Heart left ventricle (tissue), 16 donors: ENCODE measurements at regions of chr7 and their contacts with region 1.

Region 1: GRCh38 chr7:5243261-5243660 is 39.5 kb upstream of the SLC29A4 start:
- DNase-seq: no peak
- ATAC-seq: no peak
- H3K4me3 ChIP-seq: no peak overlapping the region
- H3K27ac ChIP-seq: no peak overlapping the region
- H3K4me1 ChIP-seq: peaks cover 0 to 17% (median 5%) of the 10 kb centered on the region in 12 donors
- H3K27me3 ChIP-seq: no peaks in the 10 kb centered on the region
- CTCF ChIP-seq: no peak
- POLR2A ChIP-seq: no peak

Region 2: GRCh38 chr7:4895766-4896165 is 347.5 kb before region 1 on chr7:
- intact Hi-C with region 1: no loop called
- DNase-seq: no peak
- ATAC-seq: no peak
- H3K4me3 ChIP-seq: no peak overlapping the region
- H3K27ac ChIP-seq: no peak overlapping the region
- H3K4me1 ChIP-seq: no peaks in the 10 kb centered on the region
- H3K27me3 ChIP-seq: peaks cover 0 to 3% (median 0%) of the 10 kb centered on the region in 9 donors
- CTCF ChIP-seq: no peak
- POLR2A ChIP-seq: no peak

Region 3: DNA sequence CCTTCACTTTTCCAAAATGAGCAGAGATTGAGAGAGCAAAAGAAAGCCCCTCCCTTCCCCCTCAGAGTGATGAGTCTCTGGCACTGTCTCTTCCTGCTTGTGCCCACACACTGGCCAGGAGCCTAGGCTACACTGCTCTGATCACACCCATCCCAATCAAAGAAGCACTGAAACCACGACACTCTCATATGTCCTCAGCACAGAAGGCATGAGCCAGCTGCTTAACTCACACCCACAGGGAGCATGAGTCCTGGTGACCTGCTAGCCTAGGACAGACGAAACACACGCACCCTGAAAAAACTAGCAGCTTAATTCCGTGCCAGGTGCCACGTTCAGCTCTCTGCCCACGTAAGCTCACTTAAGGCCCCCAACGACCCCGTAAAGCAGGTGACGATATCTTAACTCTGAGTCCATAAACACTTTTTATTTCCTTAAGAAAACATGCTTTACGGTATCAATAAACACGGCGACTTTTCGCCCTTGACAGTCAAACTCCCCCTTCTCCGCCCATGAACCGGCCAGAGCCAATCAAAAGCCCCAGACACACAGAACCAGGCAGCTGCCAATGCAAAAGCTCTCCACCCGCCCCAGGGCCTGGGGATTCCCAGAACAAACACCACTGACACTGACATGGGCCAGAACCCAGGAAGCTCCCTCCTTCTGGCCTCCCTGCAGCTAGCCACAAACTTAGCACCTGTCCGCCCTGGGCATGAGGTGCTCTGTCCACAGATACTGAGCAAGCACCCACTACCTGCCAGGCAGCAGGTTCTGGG is 111.4 kb after region 1 on chr7:
- intact Hi-C with region 1: loop called in 5 of 10 experiments (anchors 5 to 10 kb)
- DNase-seq: peak in 4 of 5 donors; percentile 71 to 85 (median 78)
- ATAC-seq: peak; percentile 90 to 96 (median 94)
- H3K4me3 ChIP-seq: peak overlapping the region in 8 of 12 donors; percentile 16 to 41 (median 32)
- H3K27ac ChIP-seq: peak overlapping the region in 11 of 12 donors; percentile 9 to 86 (median 73)
- H3K4me1 ChIP-seq: peaks cover 0 to 27% (median 16%) of the 10 kb centered on the region in 12 donors
- H3K27me3 ChIP-seq: no peaks in the 10 kb centered on the region
- CTCF ChIP-seq: no peak
- POLR2A ChIP-seq: no peak

Region 4: GRCh38 chr7:5363729-5364128 is 120.5 kb after region 1 on chr7:
- intact Hi-C with region 1: loop called in 4 of 10 experiments (anchors 5 to 10 kb)
- DNase-seq: no peak
- ATAC-seq: no peak
- H3K4me3 ChIP-seq: no peak overlapping the region
- H3K27ac ChIP-seq: no peak overlapping the region
- H3K4me1 ChIP-seq: peaks cover 0 to 14% (median 8%) of the 10 kb centered on the region in 12 donors
- H3K27me3 ChIP-seq: no peaks in the 10 kb centered on the region
- CTCF ChIP-seq: no peak
- POLR2A ChIP-seq: no peak